ENCODE measurements at regions of chr2 and their contacts with region 1.

Region 1: GRCh38 chr2:158753641-158754611 is 41.2 kb upstream of the DAPL1 start:
- DNase-seq: peak; percentile 41
- H3K4me3 ChIP-seq: peak overlapping the region; percentile 9
- H3K27ac ChIP-seq: no peak overlapping the region
- H3K4me1 ChIP-seq: no peaks in the 10 kb centered on the region
- H3K27me3 ChIP-seq: peaks cover 4% of the 10 kb centered on the region
- CTCF ChIP-seq: peak; percentile 82

Region 2: GRCh38 chr2:158034199-158034866 is 719.6 kb before region 1 on chr2:
- intact Hi-C with region 1: loop called (anchors 5 kb)
- DNase-seq: peak; percentile 68
- H3K4me3 ChIP-seq: no peak overlapping the region
- H3K27ac ChIP-seq: no peak overlapping the region
- H3K4me1 ChIP-seq: no peaks in the 10 kb centered on the region
- H3K27me3 ChIP-seq: no peaks in the 10 kb centered on the region
- CTCF ChIP-seq: peak; percentile 51

Region 3: GRCh38 chr2:158179660-158180059 is 574.3 kb before region 1 on chr2:
- intact Hi-C with region 1: loop called (anchors 10 kb)
- DNase-seq: no peak
- H3K4me3 ChIP-seq: no peak overlapping the region
- H3K27ac ChIP-seq: no peak overlapping the region
- H3K4me1 ChIP-seq: no peaks in the 10 kb centered on the region
- H3K27me3 ChIP-seq: no peaks in the 10 kb centered on the region
- CTCF ChIP-seq: no peak